ENCODE measurements at regions of chr19 and their contacts with region 1.

Region 1: DNA sequence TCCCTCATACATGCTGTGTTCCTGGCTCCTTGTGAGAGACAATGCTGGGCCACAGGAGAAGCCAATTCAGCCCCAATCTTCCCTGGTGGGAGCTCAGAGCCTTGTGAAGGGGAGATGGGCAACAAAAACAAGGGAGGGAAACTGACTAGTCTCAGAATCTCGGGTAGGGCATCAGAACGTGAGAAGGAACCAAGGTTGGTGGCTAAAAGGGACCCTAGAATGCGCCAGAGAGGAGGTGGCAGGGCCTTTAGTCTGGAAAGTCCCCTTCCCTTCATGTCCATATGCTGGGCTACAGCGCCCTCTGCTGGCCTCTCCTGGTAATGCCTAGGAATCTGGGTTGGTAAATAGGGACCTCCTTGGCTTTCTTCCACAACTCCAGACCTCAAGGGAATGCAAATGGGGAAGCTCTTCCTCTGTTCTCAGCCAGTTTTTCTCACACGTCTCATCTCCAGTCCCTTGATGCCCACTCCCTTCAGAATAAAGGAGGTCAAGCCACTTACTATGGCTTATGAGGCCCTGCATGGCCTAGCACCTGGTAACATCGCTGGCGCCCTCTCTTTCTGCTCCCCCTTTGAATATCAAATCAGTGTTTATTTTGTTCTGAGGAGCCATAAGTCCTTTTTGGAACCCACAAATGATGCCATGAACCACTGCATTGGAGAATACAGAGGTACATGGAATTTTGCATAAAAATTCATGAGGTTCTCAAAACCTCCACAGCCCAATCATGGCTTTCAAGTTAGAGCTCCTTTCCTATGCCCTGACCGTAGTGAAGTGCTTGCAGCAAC is 1.4 kb upstream of the CCDC97 start:
- DNase-seq: peak; percentile 82 to 99 (median 94)
- ATAC-seq: peak; percentile 57 to 85 (median 74)
- H3K4me3 ChIP-seq: peak overlapping the region in 2 of 4 donors; percentile 47 to 57
- H3K27ac ChIP-seq: peak overlapping the region; percentile 41 to 98 (median 92)
- H3K4me1 ChIP-seq: peaks cover 6 to 25% (median 6%) of the 10 kb centered on the region in 3 donors
- H3K27me3 ChIP-seq: no peaks in the 10 kb centered on the region
- CTCF ChIP-seq: peak; percentile 91 to 98 (median 94)

Region 2: GRCh38 chr19:41206926-41207750 is 101.4 kb before region 1 on chr19:
- intact Hi-C with region 1: loop called in 1 of 3 experiments (anchors 10 kb)
- DNase-seq: no peak
- ATAC-seq: peak in 2 of 4 donors; percentile 13 to 14
- H3K4me3 ChIP-seq: no peak overlapping the region
- H3K27ac ChIP-seq: no peak overlapping the region
- H3K4me1 ChIP-seq: no peaks in the 10 kb centered on the region
- H3K27me3 ChIP-seq: peaks cover 0 to 9% (median 0%) of the 10 kb centered on the region in 4 donors
- CTCF ChIP-seq: no peak

Measured in pancreas (tissue), 10 donors.